Calu3 (cell line): ENCODE measurements at regions of chr13 and their contacts with region 1.

Region 1: DNA sequence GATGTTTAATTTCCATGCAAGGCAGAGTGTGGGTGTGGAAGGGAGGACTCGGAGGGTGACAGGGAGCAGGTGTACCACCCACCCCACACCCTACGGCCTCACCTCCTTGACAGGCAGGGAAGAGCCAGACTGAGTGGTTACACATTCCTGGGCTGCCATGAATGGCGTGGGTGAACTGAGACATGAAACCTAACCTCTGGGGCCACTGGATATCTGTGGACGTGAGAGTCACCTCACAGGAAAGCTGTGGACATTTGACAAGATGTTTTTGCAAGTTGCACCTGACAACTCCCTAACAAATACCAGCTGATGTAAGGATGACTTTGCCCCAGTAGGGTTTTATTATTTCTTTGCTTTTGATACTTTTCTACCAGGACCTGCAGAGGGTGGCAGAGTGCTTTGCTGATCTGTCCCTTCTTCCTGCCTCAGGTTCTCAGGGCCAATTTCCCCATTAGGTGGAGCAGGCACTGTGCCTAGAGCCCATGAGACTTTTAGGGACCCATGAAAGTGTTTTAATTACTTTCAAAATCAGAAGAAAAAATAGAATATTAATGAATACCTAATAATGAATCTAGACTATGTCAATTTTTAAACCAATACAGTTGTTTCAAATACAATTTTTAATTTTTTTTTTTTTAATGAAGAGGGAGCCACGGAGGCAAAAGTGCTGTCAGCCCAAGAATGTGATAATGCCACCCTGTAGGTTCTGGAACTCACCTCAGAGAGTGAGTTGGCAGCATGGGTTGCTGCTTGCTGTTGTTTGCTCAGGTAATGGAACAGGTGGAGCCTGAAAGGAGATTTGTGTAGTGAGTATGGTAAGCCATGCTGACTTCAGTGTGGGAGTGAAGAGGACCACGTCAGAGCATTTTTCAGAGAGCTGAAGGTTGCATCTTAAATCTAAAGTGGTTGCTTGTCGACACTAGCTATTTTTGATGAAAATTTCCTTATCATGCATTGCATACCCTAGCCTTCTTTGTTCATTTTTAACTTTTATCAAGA is 58.0 kb upstream of the CYSLTR2 start:
- DNase-seq: peak; percentile 63
- H3K4me3 Mint-ChIP-seq: no peak overlapping the region
- H3K27ac Mint-ChIP-seq: peak overlapping the region; percentile 90
- H3K4me1 Mint-ChIP-seq: peaks cover 62% of the 10 kb centered on the region
- H3K27me3 Mint-ChIP-seq: no peaks in the 10 kb centered on the region
- CTCF ChIP-seq: peak; percentile 46

Region 2: DNA sequence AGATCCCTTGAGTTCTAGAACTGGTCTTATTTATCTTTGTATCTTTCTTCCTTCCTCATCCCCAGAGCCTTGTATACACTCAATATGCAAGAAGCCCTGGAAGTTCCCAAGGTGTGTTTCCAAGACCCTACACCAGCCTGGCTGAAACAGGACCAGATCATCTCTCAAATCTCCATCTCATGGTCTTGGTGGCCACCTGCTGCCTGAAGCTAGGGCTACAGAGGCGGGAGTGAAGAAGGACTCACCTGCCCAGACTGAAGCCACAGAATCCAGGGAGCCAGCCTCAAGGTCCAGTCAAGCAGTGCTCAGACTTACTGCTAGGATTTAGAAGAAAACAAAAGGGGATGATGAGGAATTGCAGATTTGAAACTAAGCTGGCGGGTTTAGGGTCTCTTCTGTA is 51.9 kb after region 1 on chr13:
- CTCF ChIA-PET with region 1: interaction called, 3 read pairs
- intact Hi-C with region 1: loop called (anchors 5 kb)
- DNase-seq: peak; percentile 7
- H3K4me3 Mint-ChIP-seq: no peak overlapping the region
- H3K27ac Mint-ChIP-seq: no peak overlapping the region
- H3K4me1 Mint-ChIP-seq: peaks cover 23% of the 10 kb centered on the region
- H3K27me3 Mint-ChIP-seq: no peaks in the 10 kb centered on the region
- CTCF ChIP-seq: no peak

Region 3: GRCh38 chr13:48731957-48732569 is 136.3 kb after region 1 on chr13:
- CTCF ChIA-PET with region 1: no interaction called
- intact Hi-C with region 1: loop called (anchors 1 kb)
- DNase-seq: peak; percentile 57
- H3K4me3 Mint-ChIP-seq: peak overlapping the region; percentile 24
- H3K27ac Mint-ChIP-seq: no peak overlapping the region
- H3K4me1 Mint-ChIP-seq: no peaks in the 10 kb centered on the region
- H3K27me3 Mint-ChIP-seq: no peaks in the 10 kb centered on the region
- CTCF ChIP-seq: peak; percentile 61